Activated CD4-positive, alpha-beta T cell treated with anti-CD3 and anti-CD28 coated beads for 36 hours (primary cell): ENCODE measurements at regions of chr3 and their contacts with region 1.

Region 1: DNA sequence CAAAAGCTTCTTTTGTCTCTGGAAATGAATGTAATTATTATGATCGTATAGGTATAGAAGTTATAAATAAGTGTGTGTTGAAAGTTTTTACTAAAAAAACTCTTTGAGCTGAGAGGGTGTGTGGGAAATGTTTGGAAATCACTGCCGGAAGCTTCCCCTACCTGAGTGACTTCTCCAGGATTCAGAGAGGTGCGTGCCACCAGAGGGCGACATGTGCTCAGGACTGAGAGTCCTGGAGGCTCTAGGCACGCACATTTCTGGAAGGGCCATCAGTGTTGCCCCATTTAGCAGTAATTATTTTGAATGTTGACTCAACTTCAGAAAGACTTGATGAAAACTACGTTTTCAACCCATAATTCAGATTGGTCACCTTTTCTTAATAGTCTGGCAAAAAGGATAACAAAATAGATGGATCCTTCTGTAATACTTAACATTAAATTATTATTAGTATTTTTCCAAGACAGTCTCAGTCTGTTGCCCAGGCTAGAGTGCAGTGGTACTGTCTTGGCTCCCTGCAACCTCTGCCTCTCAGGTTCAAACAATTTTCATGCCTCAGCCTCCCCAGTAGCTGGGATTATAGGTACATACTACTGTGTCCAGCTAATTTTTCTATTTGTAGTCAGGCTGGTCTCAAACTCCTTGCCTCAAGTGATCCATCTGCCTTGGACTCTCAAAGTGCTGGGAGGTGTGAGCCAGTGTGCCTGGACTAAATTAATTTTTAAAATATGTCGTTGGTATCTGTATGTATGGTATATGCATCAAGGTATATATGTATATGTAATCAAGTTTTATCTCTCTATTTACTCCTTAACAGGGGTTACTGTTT is 34.5 kb downstream of the GPR171 start:
- DNase-seq: peak; percentile 92
- ATAC-seq: peak; percentile 64
- H3K4me3 Mint-ChIP-seq: no peak overlapping the region
- H3K27ac Mint-ChIP-seq: no peak overlapping the region
- H3K4me1 Mint-ChIP-seq: peaks cover 44% of the 10 kb centered on the region
- H3K27me3 Mint-ChIP-seq: no peaks in the 10 kb centered on the region

Region 2: DNA sequence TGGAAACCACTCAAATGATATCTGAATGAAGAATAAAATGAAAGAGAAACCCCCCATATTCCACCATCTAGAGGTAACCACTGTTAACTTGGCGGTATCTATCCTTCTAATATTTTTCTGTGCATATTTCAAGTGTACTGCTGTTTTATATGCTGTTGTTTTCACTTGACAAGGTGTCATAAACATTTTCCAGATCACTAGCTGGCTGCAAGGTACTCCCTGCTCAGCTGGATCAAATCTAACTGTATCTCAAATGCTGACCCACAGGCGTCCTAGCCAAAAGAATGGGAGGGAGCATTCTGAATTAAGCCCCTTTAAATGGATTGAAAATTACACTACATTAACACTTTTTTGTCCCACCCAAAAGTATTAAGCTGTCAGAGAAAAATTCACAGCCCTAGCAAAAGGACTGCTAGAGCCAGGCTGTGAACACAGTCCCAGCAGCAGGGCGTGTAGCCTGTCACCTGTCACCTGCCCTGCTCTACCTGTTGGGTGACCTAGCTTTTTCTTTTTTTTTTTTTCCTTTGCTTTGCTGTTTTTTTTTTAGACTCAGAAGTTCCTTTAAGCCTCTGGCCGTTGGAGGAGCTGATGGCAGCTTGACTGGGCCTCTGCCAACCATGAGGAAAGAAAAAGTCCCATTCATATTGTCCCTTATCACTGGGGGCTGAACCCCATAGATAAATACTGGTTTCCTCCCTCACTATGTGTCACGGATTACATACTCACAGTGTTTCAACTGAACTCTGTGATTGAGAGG is 854.1 kb before region 1 on chr3:
- CTCF ChIA-PET with region 1: no interaction called
- POLR2A ChIA-PET with region 1: no interaction called
- intact Hi-C with region 1: no loop called
- DNase-seq: no peak
- ATAC-seq: no peak
- H3K4me3 Mint-ChIP-seq: no peak overlapping the region
- H3K27ac Mint-ChIP-seq: no peak overlapping the region
- H3K4me1 Mint-ChIP-seq: no peaks in the 10 kb centered on the region
- H3K27me3 Mint-ChIP-seq: peaks cover 12% of the 10 kb centered on the region

Region 3: DNA sequence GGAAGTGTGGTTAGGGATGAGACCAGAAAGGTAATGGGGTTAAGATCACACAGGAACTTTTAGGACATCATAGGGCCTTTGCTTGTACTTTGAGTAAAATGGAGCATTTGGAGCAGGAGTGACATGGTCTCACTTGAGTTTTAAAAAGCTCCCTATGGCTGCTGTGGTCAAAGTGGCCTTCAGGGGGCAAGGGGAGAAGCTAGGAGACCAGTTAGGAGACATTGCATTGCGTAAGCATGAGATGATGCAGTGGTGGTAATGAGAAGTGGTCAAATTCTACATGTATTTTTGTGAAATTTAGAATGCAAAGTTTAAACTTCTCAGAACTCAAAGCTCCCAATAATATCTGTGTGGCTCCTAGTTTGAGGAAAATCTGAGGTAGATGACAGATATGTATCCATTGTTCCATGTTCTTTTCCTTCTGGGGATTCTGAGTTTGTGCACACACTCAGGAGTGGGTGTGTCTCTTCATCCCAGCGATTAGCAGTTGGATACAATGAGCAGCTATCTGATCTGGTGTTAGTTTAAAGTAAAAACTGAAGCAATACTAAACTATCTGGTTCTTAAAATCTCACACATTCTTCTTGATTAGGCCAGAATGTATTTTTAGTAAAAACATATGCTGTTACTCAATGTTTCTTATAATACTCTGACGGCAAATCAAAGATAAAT is 55.0 kb before region 1 on chr3:
- CTCF ChIA-PET with region 1: no interaction called
- POLR2A ChIA-PET with region 1: no interaction called
- intact Hi-C with region 1: no loop called
- DNase-seq: no peak
- ATAC-seq: no peak
- H3K4me3 Mint-ChIP-seq: no peak overlapping the region
- H3K27ac Mint-ChIP-seq: no peak overlapping the region
- H3K4me1 Mint-ChIP-seq: no peaks in the 10 kb centered on the region
- H3K27me3 Mint-ChIP-seq: peaks cover 2% of the 10 kb centered on the region

Region 4: DNA sequence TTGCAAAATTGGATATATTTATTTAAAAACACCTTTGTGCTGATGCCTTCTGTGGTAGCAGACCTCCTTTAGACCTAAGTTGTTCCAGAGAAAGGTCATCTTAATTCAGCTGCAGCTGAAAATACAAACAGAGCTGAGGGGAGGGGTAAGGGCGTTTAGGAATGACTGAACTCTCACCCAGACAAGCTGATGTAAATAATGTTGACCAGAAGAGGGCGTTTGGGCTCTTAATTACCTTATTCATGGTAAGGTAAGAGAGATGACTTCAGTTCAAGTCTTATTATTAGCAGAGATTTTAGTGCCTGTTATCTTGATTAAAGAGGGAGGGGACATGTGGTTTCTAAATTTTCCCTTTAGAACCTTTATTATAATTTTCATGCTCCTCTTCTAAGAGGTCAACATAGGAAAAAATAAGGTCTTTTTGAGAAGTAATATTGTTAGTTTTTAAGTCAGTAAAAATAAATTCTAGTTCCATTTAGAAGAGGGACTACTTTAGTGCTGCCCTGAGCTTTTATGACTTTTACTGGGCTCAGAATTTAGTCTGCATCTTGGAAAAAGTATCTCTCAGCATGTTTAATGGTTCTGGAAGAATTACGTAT is 11.8 kb before region 1 on chr3:
- CTCF ChIA-PET with region 1: interaction called, 18 read pairs
- POLR2A ChIA-PET with region 1: no interaction called
- intact Hi-C with region 1: no loop called
- DNase-seq: peak; percentile 46
- ATAC-seq: peak; percentile 92
- H3K4me3 Mint-ChIP-seq: no peak overlapping the region
- H3K27ac Mint-ChIP-seq: no peak overlapping the region
- H3K4me1 Mint-ChIP-seq: no peaks in the 10 kb centered on the region
- H3K27me3 Mint-ChIP-seq: peaks cover 4% of the 10 kb centered on the region

Region 5: GRCh38 chr3:151210676-151211381 is 42.3 kb after region 1 on chr3:
- CTCF ChIA-PET with region 1: interaction called, 30 read pairs
- POLR2A ChIA-PET with region 1: interaction called, 3 read pairs
- intact Hi-C with region 1: no loop called
- DNase-seq: peak; percentile 20
- ATAC-seq: peak; percentile 38
- H3K4me3 Mint-ChIP-seq: peak overlapping the region; percentile 41
- H3K27ac Mint-ChIP-seq: peak overlapping the region; percentile 89
- H3K4me1 Mint-ChIP-seq: peaks cover 58% of the 10 kb centered on the region
- H3K27me3 Mint-ChIP-seq: no peaks in the 10 kb centered on the region

Region 6: DNA sequence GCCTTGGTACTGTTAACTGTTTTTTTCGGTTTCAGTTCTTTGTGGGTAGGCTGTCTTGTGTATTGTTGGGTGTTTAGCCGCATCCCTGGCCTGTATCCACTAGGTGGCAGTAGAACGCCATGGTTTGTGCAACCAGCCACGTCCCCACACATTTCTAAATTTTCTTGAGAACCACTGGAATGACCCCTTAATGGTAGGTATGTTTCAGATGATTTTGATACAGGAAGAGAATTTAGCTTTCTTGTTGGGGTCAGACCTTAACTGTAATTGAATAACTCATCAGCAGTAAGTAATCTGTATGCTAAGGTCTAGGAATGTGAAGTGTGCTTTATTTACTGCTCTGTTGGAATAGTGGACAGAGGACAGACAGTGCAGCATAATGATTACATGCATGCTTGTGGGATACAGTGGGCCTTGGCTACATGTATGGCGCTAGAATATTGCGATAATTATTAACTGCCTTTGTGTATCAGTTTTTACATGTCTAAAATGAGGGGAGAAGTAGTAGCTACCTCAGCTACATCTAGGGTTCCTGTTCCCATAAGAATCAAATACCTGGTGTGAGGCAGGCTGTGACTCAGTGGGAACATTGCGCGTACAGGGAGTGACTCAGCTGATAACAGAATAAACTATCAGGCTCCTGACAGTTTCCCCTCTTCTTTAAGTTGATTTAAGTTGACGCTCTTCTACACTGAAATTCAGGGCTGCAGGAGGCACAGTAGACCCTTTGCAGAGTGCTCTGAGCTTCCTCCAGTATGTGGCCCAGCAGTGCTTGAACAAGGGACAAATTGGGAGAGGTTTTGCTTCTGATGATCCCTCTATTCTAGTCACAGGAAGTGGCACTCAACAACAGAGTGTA is 59.6 kb after region 1 on chr3:
- CTCF ChIA-PET with region 1: interaction called, 36 read pairs
- POLR2A ChIA-PET with region 1: no interaction called
- intact Hi-C with region 1: loop called (anchors 1 kb)
- DNase-seq: peak; percentile 87
- ATAC-seq: peak; percentile 75
- H3K4me3 Mint-ChIP-seq: no peak overlapping the region
- H3K27ac Mint-ChIP-seq: peak overlapping the region; percentile 64
- H3K4me1 Mint-ChIP-seq: peaks cover 58% of the 10 kb centered on the region
- H3K27me3 Mint-ChIP-seq: no peaks in the 10 kb centered on the region

Region 7: GRCh38 chr3:151282921-151283320 is 114.4 kb after region 1 on chr3:
- CTCF ChIA-PET with region 1: interaction called, 103 read pairs
- POLR2A ChIA-PET with region 1: no interaction called
- intact Hi-C with region 1: loop called (anchors 1 kb)
- DNase-seq: no peak
- ATAC-seq: peak; percentile 57
- H3K4me3 Mint-ChIP-seq: no peak overlapping the region
- H3K27ac Mint-ChIP-seq: no peak overlapping the region
- H3K4me1 Mint-ChIP-seq: peaks cover 29% of the 10 kb centered on the region
- H3K27me3 Mint-ChIP-seq: no peaks in the 10 kb centered on the region

Region 8: DNA sequence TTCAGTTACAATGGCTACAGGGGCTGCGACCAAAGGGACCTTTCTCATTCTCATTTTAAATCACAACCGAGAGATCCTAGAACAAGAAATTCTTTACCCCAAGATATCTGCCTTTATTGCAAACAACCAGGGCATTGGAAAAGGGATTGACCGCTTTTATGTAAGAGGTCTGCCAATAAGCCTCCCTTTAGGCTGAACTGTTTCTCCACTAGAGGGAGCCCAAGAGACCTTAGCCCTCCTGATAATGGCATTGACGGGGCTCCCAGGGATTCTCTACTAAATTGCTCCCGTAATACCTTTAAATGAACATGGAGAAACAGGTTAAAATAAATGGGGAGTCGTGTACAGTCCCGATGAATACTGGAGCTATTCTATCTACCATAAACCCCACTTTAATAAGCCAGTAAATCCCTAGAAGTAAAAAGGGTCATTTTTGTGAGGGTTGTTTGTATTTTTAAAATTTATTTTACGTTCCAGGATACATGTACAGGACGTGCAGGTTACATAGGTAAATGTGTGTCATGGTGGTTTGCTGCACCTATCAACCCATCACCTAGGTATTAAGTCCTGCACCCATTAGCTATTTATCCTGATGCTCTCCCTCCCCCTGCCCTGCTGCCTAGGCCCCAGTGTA is 299.9 kb after region 1 on chr3:
- CTCF ChIA-PET with region 1: no interaction called
- POLR2A ChIA-PET with region 1: no interaction called
- intact Hi-C with region 1: loop called in 1 of 2 experiments (anchors 10 kb)
- DNase-seq: peak; percentile 46
- ATAC-seq: peak; percentile 70
- H3K4me3 Mint-ChIP-seq: no peak overlapping the region
- H3K27ac Mint-ChIP-seq: no peak overlapping the region
- H3K4me1 Mint-ChIP-seq: no peaks in the 10 kb centered on the region
- H3K27me3 Mint-ChIP-seq: peaks cover 2% of the 10 kb centered on the region

Region 9: DNA sequence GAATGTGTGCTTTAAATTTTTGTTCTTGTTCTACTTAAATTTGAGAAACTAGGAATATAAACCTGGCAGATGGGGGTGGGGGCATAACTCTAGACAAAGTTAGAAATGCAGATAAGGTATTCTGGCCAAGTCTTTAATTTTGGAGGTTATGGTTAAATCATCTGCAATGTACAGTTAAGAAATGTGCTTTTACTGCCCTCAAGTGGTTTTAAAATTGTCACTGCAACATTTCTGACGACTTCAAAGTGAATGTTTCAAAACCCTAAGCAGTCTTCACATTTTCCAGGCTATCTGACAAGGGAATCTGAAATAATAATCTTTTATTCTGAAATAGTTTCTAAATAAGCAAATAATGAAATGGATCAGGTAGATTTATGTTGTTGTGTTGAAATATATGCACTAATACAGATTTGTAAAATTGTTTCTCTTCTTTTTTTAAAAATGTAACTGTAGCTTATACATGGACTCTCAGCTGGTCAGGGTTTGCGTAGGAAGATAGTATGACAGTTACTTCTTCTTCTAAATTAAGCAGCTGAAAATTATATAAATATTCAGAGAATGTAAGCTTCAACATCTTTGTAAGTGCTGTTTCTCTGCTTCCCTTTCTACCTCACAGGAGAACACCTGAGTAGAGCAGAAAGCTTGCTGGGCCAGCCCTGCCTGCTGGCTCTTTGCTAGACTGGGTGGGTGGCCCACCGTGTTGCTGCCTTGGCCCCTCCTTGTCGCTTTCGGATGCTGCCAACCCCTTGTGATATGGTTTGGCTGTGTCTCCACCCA is 750.0 kb after region 1 on chr3:
- CTCF ChIA-PET with region 1: interaction called, 4 read pairs
- POLR2A ChIA-PET with region 1: no interaction called
- intact Hi-C with region 1: loop called in 1 of 2 experiments (anchors 10 kb)
- DNase-seq: no peak
- ATAC-seq: no peak
- H3K4me3 Mint-ChIP-seq: no peak overlapping the region
- H3K27ac Mint-ChIP-seq: no peak overlapping the region
- H3K4me1 Mint-ChIP-seq: no peaks in the 10 kb centered on the region
- H3K27me3 Mint-ChIP-seq: no peaks in the 10 kb centered on the region